ENCODE measurements at regions of chr5 and their contacts with region 1.

Region 1: DNA sequence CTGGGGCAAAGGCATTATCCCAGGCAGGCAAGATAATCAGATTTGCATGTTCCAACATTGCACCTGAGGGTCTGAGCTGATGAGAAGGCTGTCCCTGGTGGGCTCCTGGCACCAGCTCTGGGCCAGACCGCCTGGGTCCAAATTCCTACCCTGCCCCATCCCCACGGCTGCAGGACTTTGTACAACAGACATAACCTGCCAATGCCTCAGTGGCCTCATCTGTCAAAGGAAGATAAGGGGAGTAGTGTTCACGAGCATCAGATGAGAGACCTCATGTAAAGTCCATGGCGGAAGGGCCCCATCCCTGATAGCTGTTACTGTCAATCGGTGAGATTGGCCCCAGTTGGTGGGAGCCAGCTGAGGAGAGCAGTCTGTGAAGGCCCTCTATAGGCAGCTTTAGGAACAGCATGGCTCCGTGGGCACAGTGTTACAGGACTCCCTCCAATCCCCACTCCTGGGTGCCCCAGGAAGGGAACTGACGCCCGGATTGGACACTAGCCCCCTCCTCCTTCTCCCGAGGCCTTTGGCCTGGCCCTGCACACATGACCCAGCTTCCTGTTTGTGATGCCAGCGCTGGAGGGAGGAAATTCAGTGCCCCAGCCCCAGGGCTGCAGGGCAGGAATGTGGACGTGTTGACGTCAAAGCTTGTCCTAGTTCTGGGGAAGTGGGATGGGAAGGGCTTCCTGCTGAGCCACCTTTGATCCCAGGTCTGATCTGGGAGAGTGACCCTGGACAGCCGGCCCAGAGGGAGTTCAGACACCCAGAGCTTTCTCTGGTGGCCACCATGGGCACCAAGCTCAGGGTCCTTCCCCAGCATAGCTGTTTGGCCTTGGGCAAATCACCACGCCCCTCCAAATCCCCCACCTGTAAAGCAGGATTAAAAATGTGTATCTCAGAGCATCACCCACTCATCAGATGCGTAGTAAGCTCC is 56.2 kb downstream of the DUSP1 start:
- DNase-seq: peak; percentile 83

Region 2: DNA sequence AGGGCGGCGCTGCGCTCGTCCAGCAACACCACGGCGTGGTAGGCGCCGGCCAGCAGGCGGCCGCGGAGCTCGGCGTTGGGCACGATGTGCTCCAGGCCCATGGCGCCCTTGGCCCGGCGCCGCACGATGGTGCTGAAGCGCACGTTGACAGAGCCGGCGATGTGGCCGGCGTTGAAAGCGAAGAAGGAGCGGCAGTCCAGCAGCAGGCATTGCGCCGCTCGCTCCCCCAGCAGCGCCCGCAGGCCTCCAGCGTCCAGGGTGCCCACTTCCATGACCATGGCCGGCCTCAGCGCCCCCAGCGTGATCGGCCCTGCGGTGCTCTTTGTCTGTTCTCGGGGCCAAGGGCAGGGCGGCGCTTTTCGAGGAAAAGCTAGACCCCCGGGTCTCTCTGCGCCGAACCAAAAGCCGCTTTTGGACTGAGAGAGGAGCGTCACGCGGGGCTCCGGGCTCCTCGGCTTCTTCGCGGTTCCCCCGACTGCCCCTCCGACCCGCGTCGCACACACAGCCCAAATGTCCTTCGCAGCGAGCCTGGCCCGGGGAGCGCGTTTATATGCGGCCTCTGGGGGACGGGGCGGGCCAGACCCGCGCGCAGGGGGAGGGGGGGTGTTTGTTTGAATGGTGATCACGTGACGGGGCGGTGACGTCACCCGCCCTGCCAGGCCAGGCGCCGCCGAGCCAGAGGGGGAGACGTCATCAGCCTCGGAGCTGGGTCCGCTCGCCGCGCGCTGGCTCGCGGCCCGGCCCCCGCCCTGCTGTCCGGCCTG is 56.1 kb after region 1 on chr5 and contains the start of gene DUSP1:
- CTCF ChIA-PET with region 1: interaction called, 50 read pairs
- POLR2A ChIA-PET with region 1: interaction called, 37 read pairs
- DNase-seq: peak; percentile 99

Region 3: GRCh38 chr5:172777881-172778814 is 63.4 kb after region 1 on chr5:
- CTCF ChIA-PET with region 1: interaction called, 50 read pairs
- POLR2A ChIA-PET with region 1: interaction called, 27 read pairs
- DNase-seq: no peak

Region 4: GRCh38 chr5:172897481-172898217 is 182.9 kb after region 1 on chr5:
- CTCF ChIA-PET with region 1: interaction called, 11 read pairs
- POLR2A ChIA-PET with region 1: no interaction called
- DNase-seq: no peak

Region 5: DNA sequence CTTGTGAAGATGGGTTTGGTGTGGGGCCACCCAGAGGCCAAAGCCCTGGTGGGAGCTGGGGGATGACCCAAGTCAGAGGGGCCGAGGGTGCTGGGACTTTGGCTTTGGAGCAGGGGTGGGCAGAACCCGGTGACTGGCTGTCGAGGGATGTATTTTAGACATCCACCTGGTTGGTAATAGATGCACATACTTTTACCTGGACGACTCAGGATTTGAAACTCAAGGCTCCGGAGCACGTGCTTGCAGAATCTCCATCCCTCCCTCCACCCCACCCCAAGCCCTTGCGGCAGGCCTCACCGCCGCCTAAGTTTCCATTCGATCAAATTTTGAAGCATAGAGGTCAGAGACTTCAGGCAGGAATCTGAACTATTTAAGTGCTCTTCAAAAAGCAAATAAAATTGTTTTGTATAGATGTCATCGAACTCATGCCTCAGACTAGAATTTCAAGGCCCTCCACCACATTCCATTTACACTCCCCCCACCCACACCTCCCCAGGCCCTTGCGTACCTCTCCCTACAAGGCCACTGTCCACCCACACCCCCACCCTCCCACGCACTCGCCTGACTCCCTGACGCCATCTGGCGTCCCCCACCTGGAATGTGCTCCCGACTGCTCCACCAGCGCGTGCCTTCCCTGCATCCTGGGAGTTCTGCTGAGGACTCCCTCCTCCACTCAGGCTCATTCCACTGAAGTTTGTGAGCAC is 187.9 kb after region 1 on chr5:
- CTCF ChIA-PET with region 1: interaction called, 22 read pairs
- POLR2A ChIA-PET with region 1: interaction called, 3 read pairs
- DNase-seq: peak; percentile 72

Region 6: DNA sequence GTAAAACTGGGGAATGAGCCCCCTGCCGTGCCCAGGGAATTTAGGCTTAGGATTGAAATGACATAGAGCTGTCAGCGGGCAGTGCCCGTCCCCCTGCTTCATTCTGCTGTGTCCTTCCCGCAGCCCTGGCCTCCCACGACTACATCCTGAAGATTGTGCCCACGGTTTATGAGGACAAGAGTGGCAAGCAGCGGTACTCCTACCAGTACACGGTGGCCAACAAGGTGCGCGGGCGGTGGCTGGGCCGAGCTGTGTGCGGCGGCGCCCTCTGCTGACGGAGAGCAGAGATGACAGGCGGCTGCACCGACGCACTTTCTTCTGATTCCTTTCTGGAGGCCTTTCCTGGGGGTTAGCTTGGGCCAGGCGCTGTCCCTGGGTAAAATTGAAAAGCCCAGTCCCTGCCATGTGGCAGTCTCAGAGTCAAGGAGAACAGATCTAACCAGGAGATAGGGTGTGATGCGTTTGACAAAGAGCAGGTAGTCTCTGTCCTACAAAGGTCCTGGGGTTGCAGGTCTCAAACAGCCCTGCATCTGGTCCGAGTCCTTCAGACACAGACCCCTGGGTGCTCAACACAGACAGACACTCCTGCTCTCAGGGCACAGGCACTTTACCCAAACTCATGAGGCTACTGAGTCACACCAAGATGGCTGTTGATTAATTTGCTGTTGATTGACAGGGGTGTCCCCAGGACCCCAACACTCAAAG is 217.7 kb after region 1 on chr5:
- CTCF ChIA-PET with region 1: interaction called, 61 read pairs
- POLR2A ChIA-PET with region 1: interaction called, 3 read pairs
- DNase-seq: peak; percentile 89

Region 7: GRCh38 chr5:172958331-172959046 is 243.7 kb after region 1 on chr5:
- CTCF ChIA-PET with region 1: interaction called, 10 read pairs
- POLR2A ChIA-PET with region 1: interaction called, 5 read pairs
- DNase-seq: peak; percentile 98

Measured in HEK293T (cell line).